GM23248 (cell line): ENCODE measurements at regions of chr9 and their contacts with region 1.

Region 1: DNA sequence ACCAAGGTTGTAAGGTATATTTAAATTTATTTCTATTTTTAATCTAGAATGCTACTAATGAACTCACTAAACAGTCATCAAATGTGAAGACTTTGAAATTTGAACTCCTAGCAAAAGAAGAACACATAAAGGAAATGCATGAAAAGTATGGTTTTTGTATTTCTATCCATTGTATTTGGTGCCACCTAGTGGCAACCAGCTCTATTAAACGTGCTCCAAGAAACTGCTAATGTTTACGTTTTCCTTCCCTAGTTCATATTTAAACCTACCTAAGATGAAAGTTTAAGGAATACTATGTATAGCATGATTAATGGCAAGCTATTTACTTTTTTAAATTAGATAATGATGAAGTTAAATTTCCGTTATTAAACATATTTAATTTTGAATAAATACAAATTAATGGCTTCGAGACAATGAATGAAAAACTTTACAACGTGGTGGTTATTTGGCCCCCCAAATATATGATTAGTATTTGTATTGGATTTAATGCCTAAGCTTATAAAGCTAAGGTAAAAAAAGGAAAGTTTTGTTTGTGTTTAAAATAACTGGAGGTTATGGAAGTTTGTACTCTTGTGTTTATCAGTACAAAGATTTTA is 115.9 kb upstream of the SH3GL2 start:
- DNase-seq: peak; percentile 76
- H3K4me3 ChIP-seq: no peak overlapping the region
- H3K27ac ChIP-seq: no peak overlapping the region
- H3K4me1 ChIP-seq: no peaks in the 10 kb centered on the region
- H3K27me3 ChIP-seq: no peaks in the 10 kb centered on the region

Region 2: DNA sequence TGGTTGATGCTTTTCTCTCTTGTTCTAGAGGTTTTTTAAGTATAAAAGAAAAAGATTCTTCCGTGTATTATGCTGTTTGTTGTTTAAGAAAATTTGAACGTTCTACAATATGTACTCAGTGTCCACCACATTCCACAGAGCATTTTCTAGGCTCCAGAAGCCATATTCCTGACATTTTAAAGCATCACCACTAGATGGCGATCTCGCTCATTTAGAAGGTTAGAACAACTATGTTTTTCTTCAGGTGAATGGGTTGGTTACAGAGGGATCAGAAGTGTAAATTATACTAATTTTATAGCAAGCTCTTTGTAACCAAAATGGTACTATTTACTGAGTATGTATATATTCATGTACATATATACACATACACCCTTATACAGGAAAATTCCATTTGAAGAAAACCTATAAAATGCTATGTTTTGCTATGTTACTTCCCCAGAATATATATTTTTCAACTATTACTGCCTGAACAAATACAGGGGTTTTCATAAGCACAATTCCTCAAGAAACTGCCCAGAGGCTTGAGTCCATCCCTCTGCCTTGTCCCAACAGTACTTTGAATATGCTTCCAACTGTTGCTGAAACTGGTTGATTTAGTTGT is 1625.8 kb before region 1 on chr9:
- in situ Hi-C with region 1: loop called (anchors 25 kb)
- DNase-seq: peak; percentile 70
- H3K4me3 ChIP-seq: no peak overlapping the region
- H3K27ac ChIP-seq: no peak overlapping the region
- H3K4me1 ChIP-seq: no peaks in the 10 kb centered on the region
- H3K27me3 ChIP-seq: no peaks in the 10 kb centered on the region